GM10248 (cell line): ENCODE measurements at regions of chr9 and their contacts with region 1.

Region 1: GRCh38 chr9:123739387-123739786 is 190.5 kb downstream of the DENND1A start:
- DNase-seq: peak; percentile 24
- CTCF ChIP-seq: no peak

Region 2: GRCh38 chr9:123749580-123750202 is 10.3 kb after region 1 on chr9:
- CTCF ChIA-PET with region 1: interaction called, 24 read pairs
- POLR2A ChIA-PET with region 1: no interaction called
- DNase-seq: peak; percentile 61
- CTCF ChIP-seq: peak; percentile 12

Region 3: GRCh38 chr9:124222918-124223720 is 483.7 kb after region 1 on chr9:
- CTCF ChIA-PET with region 1: no interaction called
- POLR2A ChIA-PET with region 1: no interaction called
- DNase-seq: no peak
- CTCF ChIP-seq: no peak